H1 (cell line): ENCODE measurements at regions of chr19 and their contacts with region 1.

Region 1: GRCh38 chr19:55345818-55346724 is 6.4 kb downstream of the KMT5C start:
- DNase-seq: no peak
- H3K4me3 ChIP-seq: no peak overlapping the region
- H3K27ac ChIP-seq: peak overlapping the region; percentile 37; the same call in 1 of the 2 replicates
- H3K4me1 ChIP-seq: peaks cover 11 to 44% (median 32%) of the 10 kb centered on the region in 4 experiments
- H3K27me3 ChIP-seq: no peaks in the 10 kb centered on the region
- CTCF ChIP-seq: no peak
- EP300 ChIP-seq: no peak
- POLR2A ChIP-seq: no peak
- RAD21 ChIP-seq: no peak

Region 2: GRCh38 chr19:55289117-55289796 is 56.8 kb before region 1 on chr19:
- CTCF ChIA-PET with region 1: interaction called, 11 read pairs
- POLR2A ChIA-PET with region 1: interaction called, 3 read pairs
- DNase-seq: no peak
- H3K4me3 ChIP-seq: no peak overlapping the region
- H3K27ac ChIP-seq: no peak overlapping the region
- H3K4me1 ChIP-seq: peaks cover 0 to 4% (median 0%) of the 10 kb centered on the region in 4 experiments; a peak in 1 of 7 replicates
- H3K27me3 ChIP-seq: no peaks in the 10 kb centered on the region
- CTCF ChIP-seq: no peak
- EP300 ChIP-seq: no peak
- POLR2A ChIP-seq: no peak
- RAD21 ChIP-seq: no peak

Region 3: DNA sequence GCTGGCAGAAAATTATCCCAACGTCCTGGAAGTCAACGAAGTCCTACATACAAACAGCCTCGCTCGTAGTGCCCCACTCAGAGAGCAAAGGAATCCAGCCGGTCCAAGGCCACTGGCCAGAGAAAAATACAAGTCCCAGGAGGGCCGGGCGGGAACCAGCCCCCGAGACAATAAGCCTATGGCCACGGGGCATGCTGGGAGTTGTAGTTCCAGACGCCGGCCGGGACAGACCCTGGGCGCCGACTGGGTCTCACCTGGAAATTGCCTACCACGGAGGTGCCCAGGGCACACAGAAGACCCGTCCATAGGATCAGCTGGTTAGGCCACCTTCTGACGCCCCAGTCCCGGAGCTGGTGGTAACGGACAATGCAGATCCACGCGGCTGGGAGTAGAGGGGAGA is 26.3 kb before region 1 on chr19:
- CTCF ChIA-PET with region 1: interaction called, 4 read pairs
- POLR2A ChIA-PET with region 1: interaction called, 23 read pairs
- DNase-seq: peak; percentile 61 to 93
- H3K4me3 ChIP-seq: peak overlapping the region; percentile 24 to 56 (median 37); a peak in 7 of 8 replicates
- H3K27ac ChIP-seq: no peak overlapping the region
- H3K4me1 ChIP-seq: peaks cover 0 to 10% (median 5%) of the 10 kb centered on the region in 4 experiments; a peak in 6 of 7 replicates
- H3K27me3 ChIP-seq: no peaks in the 10 kb centered on the region
- CTCF ChIP-seq: no peak
- EP300 ChIP-seq: no peak
- POLR2A ChIP-seq: no peak; a peak in 1 of 3 replicates
- RAD21 ChIP-seq: no peak

Region 4: GRCh38 chr19:55376241-55376933 is 30.3 kb after region 1 on chr19 and contains the start of gene TMEM190:
- CTCF ChIA-PET with region 1: interaction called, 3 read pairs
- POLR2A ChIA-PET with region 1: interaction called, 58 read pairs
- DNase-seq: peak in 1 of 2 experiments; percentile 76
- H3K4me3 ChIP-seq: peak within 1 kb of the TSS; percentile 35 to 60 (median 44); a peak in 7 of 8 replicates
- H3K27ac ChIP-seq: no peak within 1 kb of the TSS
- H3K4me1 ChIP-seq: peaks cover 5 to 49% (median 36%) of the 10 kb centered on the region in 4 experiments
- H3K27me3 ChIP-seq: peaks cover 8 to 34% (median 25%) of the 10 kb centered on the region in 4 experiments
- CTCF ChIP-seq: no peak
- EP300 ChIP-seq: no peak
- POLR2A ChIP-seq: no peak
- RAD21 ChIP-seq: no peak
- total RNA-seq, gene TMEM190: 1.4 TPM in 1 of 2 replicates, not detected in the other

Region 5: GRCh38 chr19:55437410-55438075 is 91.5 kb after region 1 on chr19:
- CTCF ChIA-PET with region 1: no interaction called
- POLR2A ChIA-PET with region 1: no interaction called
- DNase-seq: peak in 1 of 2 experiments; percentile 87
- H3K4me3 ChIP-seq: no peak overlapping the region
- H3K27ac ChIP-seq: no peak overlapping the region
- H3K4me1 ChIP-seq: peaks cover 6 to 17% (median 7%) of the 10 kb centered on the region in 4 experiments
- H3K27me3 ChIP-seq: peaks cover 14 to 44% (median 36%) of the 10 kb centered on the region in 4 experiments
- CTCF ChIP-seq: no peak
- EP300 ChIP-seq: no peak
- POLR2A ChIP-seq: no peak
- RAD21 ChIP-seq: peak; percentile 8 to 15; a peak in 2 of 4 replicates